ENCODE measurements at regions of chr12 and their contacts with region 1.

Region 1: GRCh38 chr12:111753144-111753881 is 13.4 kb upstream of the ALDH2 start:
- DNase-seq: peak; percentile 75
- ATAC-seq: peak; percentile 91 to 93
- H3K4me3 ChIP-seq: no peak overlapping the region
- H3K27ac ChIP-seq: no peak overlapping the region
- H3K4me1 ChIP-seq: peaks cover 24% of the 10 kb centered on the region
- H3K27me3 ChIP-seq: no peaks in the 10 kb centered on the region
- CTCF ChIP-seq: peak; percentile 92

Region 2: DNA sequence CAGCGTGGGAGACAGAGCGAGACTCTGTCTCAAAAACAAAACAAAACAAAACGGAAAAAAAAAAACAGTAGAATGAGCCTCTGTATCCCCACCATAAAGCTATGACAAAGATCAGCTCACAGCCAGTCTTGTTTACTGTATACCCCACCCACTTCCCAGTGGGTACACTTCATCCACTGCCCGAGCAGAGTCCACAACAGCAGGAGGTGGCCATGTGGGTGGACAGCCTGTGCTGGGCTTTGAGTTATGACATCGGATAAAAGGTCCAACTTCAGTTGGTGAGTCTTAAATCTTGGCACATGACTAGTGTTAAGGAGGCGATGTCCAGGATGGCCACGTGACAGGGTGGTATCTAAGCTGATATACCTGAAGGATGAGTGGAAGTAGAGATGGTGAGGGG is 53.9 kb after region 1 on chr12:
- intact Hi-C with region 1: loop called (anchors 5 kb)
- DNase-seq: peak; percentile 16
- ATAC-seq: peak in 1 of 2 donors; percentile 37
- H3K4me3 ChIP-seq: no peak overlapping the region
- H3K27ac ChIP-seq: no peak overlapping the region
- H3K4me1 ChIP-seq: no peaks in the 10 kb centered on the region
- H3K27me3 ChIP-seq: no peaks in the 10 kb centered on the region
- CTCF ChIP-seq: no peak

Region 3: GRCh38 chr12:111819191-111820150 is 66.2 kb after region 1 on chr12:
- intact Hi-C with region 1: no loop called
- DNase-seq: no peak
- ATAC-seq: no peak
- H3K4me3 ChIP-seq: no peak overlapping the region
- H3K27ac ChIP-seq: no peak overlapping the region
- H3K4me1 ChIP-seq: peaks cover 10% of the 10 kb centered on the region
- H3K27me3 ChIP-seq: no peaks in the 10 kb centered on the region
- CTCF ChIP-seq: no peak

Region 4: DNA sequence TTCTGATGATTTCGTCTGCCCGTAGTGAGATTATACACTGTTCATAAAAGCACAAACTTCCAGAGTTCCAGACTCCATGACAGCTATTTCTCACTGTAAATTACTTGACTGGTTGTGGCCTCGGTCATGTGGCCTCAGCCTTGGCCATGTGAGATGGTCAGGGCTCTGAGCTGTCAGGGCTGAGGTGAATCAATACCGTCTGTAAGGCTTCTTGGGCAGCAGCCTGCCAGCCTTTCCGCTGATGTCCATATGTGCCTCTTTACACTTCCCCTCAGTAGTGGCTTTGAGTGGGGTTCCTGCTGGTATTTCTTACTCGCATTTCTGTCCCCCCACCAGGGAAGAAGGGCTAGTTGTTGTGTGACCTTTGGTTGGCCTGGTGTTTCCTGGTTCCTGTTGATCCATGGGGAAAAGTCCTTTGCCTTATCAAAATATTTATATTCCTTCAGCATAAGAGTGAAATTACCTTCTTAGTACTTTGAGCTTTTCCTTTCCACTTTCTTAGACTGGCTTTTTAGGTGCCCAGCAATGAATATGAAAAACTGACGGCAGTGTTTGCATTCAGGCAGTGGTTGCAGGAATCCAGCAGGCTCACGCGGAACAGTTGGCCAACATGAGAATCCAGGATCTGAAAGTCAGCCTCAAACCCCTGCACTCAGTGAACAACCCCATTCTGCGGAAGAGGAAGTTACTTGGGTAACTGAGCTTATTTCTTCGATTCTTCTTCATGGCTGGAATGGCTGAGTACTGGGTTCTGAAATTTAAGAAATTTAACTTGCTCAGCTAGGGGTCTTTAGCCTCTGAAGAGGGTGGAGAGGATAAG is 134.8 kb after region 1 on chr12:
- intact Hi-C with region 1: no loop called
- DNase-seq: peak; percentile 51
- ATAC-seq: peak; percentile 60 to 68
- H3K4me3 ChIP-seq: no peak overlapping the region
- H3K27ac ChIP-seq: peak overlapping the region; percentile 33
- H3K4me1 ChIP-seq: no peaks in the 10 kb centered on the region
- H3K27me3 ChIP-seq: no peaks in the 10 kb centered on the region
- CTCF ChIP-seq: no peak

Measured in lower lobe of right lung (tissue), 2 donors.